GM10248 (cell line): ENCODE measurements at regions of chr3 and their contacts with region 1.

Region 1: GRCh38 chr3:186534113-186534669 is 10.0 kb downstream of the CRYGS start:
- DNase-seq: peak; percentile 64
- CTCF ChIP-seq: no peak

Region 2: GRCh38 chr3:185983495-185984141 is 550.6 kb before region 1 on chr3:
- CTCF ChIA-PET with region 1: interaction called, 103 read pairs
- POLR2A ChIA-PET with region 1: no interaction called
- DNase-seq: peak; percentile 81
- CTCF ChIP-seq: peak; percentile 89

Region 3: GRCh38 chr3:186400662-186401061 is 133.5 kb before region 1 on chr3:
- CTCF ChIA-PET with region 1: no interaction called
- POLR2A ChIA-PET with region 1: no interaction called
- DNase-seq: no peak
- CTCF ChIP-seq: no peak

Region 4: DNA sequence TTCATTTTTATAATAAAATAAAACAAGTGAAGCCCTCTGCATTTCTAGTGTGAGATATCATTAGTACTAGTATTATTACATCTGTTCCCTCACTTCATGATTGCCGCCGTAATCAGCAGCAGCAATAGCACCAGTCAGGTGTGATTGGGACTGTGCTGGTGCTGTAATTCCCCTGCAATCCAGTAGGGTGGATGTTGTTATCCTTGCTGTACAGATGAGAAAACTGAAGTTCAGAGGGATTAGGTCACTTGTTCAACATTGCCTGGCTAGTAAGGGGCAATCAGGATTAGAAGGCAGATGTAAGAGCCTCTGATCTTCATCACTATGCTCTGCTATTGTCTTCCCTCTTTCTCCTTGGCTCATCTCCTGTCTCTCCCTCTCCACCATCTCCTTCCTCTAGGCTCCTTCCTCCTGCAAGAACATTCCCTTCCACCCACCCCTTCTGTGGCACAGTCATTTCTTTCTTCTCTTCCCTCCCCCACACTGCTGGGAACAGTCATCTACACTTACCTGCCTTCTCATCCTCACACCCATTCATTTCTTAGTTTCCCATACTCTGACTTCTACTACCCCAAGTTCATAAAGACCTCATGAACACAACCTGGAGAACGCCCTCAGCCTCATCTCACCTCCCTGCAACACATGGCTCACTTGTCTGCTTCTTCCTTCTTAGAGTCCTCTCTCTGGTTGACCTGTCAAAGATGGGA is 19.7 kb before region 1 on chr3:
- CTCF ChIA-PET with region 1: interaction called, 126 read pairs
- POLR2A ChIA-PET with region 1: interaction called, 10 read pairs
- DNase-seq: no peak
- CTCF ChIP-seq: peak; percentile 24

Region 5: DNA sequence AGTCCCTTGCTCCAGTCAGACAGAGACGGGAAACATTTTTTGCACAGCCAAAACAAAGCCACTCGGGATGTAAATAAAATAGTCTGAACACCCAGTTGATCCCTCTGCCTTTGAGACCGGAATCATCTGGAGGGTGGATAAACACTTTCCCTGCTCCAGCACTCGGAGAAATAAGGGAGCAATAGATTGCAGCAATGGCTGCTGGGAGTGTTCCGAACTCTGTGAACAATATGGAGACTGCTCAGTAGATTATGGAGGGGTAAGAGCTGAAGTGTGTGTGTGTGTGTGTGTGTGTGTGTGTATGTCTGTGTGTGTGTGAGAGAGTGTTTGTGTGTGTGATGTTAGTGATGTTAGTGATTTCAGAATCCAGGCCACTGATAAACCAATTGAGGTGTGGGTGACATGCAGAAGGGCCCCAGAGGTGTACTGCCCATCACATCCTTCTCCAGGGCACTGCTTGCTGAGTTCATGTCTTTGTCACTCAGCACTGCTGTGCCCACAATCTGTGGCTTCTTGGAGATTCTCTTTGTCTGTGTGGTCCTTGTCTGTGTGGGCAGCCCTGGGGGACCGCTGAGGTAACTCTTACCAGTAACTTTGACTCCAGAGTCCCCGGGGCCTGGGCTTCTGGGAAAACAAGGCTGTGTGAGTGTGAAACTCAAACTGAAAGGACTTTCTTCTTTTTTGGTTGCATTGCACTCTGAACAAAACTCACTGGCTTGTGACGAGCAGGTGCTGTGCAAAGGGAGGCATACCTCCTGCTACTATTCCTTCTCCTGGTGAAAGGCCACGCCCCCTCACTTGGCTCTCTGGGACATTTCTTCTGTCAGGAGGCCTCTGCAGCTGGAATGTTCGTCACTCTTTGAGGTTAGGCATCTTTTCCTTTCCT is 13.0 kb before region 1 on chr3:
- CTCF ChIA-PET with region 1: interaction called, 110 read pairs
- POLR2A ChIA-PET with region 1: interaction called, 10 read pairs
- DNase-seq: peak; percentile 59
- CTCF ChIP-seq: no peak